GM10248 (cell line): ENCODE measurements at regions of chr1 and their contacts with region 1.

Region 1: GRCh38 chr1:225467193-225468020 is 39.6 kb upstream of the LBR start:
- DNase-seq: peak; percentile 87
- CTCF ChIP-seq: no peak

Region 2: GRCh38 chr1:225380691-225381090 is 86.7 kb before region 1 on chr1:
- CTCF ChIA-PET with region 1: no interaction called
- POLR2A ChIA-PET with region 1: no interaction called
- DNase-seq: no peak
- CTCF ChIP-seq: no peak

Region 3: DNA sequence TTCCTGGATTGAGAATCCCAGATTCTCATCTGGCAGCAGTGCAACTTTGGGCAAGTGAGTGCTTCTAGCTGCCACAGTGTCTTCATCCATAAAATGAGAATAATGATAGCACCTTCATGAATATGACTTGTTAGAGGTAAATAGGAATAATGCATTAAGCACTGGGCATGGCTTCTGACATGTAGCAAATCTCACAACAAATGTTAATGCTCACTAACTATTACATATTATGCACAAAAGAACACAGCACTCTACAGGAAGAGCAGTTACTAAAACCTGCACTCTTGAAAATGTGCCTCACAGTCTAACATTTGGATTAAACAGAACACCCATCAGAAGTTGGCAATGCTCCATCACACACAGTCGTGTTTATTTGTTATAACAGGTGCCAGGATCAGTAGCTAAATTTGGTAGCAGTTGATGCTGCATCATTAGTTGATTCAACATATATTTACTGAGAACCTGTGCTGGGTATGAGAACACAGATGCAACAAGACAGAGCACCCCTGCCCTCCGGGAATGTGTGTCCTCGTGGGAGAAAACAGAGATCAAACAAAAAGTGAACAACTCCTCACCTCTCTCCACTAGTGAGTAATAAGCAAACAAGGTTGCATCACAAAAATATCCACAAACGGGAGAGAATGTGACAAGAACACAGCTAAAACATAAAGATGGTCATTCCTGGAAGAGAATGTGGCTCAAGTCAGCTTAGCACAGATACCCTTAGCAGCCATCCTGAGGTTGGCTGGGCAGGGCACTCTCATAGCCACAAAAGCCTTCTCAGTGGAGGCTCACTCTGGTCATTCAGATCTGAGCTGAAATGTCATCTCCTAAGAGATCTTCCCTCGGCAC is 13.4 kb before region 1 on chr1:
- CTCF ChIA-PET with region 1: no interaction called
- POLR2A ChIA-PET with region 1: no interaction called
- DNase-seq: no peak
- CTCF ChIP-seq: no peak

Region 4: GRCh38 chr1:225480825-225481434 is 13.5 kb after region 1 on chr1:
- CTCF ChIA-PET with region 1: interaction called, 27 read pairs
- POLR2A ChIA-PET with region 1: no interaction called
- DNase-seq: peak; percentile 70
- CTCF ChIP-seq: peak; percentile 75

Region 5: GRCh38 chr1:225498549-225499136 is 31.2 kb after region 1 on chr1:
- CTCF ChIA-PET with region 1: no interaction called
- POLR2A ChIA-PET with region 1: no interaction called
- DNase-seq: no peak
- CTCF ChIP-seq: no peak

Region 6: GRCh38 chr1:225652729-225653462 is 185.5 kb after region 1 on chr1 and contains the start of gene ENAH:
- CTCF ChIA-PET with region 1: no interaction called
- POLR2A ChIA-PET with region 1: no interaction called
- DNase-seq: peak; percentile 62
- CTCF ChIP-seq: no peak

Region 7: DNA sequence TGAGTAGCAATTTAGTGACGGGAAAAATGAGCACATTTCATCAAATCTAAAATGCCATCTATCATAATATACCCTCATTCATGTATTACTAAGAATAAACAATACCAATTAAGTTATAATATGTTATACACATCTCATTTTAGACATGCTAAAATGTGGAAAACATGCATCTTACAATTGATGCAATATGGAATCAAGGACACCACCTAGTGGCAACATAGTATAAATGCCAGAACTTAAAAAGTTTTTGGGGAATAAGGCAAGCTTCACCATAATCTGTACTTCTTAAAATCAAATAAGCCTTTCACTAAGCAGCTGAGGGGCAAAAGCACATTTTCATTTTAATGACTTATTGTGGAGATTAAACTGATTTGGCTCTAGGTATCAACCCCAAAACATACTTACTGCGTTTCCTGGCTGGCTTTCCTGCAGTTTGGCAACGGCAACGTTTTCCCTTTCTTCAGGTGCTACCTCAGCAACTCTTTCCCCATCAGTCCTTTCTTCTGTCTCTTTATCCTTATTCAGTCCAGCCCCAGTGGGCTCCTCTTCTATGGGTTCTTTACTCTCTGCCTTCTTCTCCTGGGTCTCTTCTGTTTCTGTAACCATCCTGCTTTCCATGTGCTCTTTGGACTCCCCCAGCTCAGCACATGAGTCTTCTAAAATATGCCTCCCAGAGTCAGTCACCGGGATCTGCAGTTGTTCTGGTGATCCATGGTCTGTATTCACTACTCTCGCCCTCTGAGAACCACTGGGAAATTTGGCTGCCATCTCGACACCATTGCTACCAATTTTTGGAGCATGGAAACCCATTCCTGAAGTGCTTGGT is 520.3 kb after region 1 on chr1:
- CTCF ChIA-PET with region 1: interaction called, 129 read pairs
- POLR2A ChIA-PET with region 1: no interaction called
- DNase-seq: no peak
- CTCF ChIP-seq: peak; percentile 60